Activated B cell treated with CpG ODN at 0.5 μM for 24 hours (primary cell): ENCODE measurements at regions of chr20 and their contacts with region 1.

Region 1: DNA sequence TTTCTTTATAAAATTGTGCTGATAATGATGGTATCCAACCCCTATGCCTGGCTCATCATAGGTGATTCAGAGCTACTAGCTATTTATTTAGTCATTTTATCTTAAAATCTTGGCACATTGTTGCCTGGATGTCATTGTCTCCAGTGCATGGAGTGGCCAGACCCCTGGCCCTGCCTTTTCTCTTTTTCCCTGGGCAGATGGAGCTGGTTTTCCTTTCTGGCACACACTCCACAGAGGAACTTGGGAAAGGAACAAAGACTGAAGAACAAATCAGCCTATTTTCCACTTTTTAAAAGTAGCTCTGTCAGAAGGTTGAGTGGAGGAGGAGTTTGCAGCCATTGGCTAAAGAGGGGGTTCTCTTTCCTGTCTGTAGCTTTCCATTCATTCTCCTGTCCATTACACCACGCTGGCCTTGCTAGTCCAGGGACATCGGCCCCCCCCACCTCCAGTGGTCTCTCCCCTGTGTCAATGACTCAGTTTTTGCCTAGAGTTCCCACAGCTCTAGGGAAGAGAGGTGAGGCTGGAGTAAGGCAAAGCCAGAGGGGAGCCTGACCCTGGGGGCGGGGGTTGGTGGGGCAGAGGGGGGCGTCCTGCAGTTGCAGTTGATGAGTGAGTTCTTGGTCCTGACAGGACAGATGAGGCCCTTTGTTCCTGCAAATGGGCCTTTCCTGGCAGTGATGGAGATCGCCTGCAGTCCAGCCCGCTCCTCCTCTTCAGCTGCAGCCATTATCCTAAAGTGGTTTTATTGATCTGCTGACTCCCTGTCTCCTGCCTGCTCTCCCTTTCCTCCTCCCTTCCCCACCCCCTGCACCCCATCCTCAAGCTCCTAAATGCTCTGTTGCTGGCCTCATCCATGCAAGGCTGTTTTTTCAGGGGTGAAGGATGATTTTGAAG is 774.5 kb downstream of the DHX35 start:
- DNase-seq: no peak
- ATAC-seq: no peak
- H3K4me3 Mint-ChIP-seq: no peak overlapping the region
- H3K27ac Mint-ChIP-seq: no peak overlapping the region
- H3K4me1 Mint-ChIP-seq: no peaks in the 10 kb centered on the region
- H3K27me3 Mint-ChIP-seq: no peaks in the 10 kb centered on the region
- CTCF ChIP-seq: no peak

Region 2: DNA sequence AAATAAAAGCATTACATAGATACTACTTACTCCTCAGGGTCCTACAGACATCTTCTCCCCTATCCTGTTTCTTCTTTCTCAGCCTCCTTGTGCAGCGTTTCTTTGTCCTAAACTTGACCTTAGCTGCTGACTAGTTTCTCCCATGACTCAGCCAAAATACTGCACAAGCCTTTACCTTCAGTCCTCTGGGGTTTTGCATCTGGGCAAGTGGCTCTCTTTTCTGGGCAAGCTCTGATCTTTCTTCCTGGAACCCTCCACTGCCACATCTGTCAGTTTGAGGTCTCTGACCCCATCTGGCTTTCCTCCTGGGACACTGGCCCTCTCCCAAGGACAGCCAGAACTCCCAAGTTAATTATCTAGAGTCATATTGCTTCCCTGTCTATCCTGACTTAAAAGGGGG is 63.9 kb after region 1 on chr20:
- CTCF ChIA-PET with region 1: no interaction called
- POLR2A ChIA-PET with region 1: no interaction called
- intact Hi-C with region 1: no loop called
- DNase-seq: no peak
- ATAC-seq: no peak
- H3K4me3 Mint-ChIP-seq: no peak overlapping the region
- H3K27ac Mint-ChIP-seq: no peak overlapping the region
- H3K4me1 Mint-ChIP-seq: no peaks in the 10 kb centered on the region
- H3K27me3 Mint-ChIP-seq: peaks cover 3% of the 10 kb centered on the region
- CTCF ChIP-seq: no peak

Region 3: DNA sequence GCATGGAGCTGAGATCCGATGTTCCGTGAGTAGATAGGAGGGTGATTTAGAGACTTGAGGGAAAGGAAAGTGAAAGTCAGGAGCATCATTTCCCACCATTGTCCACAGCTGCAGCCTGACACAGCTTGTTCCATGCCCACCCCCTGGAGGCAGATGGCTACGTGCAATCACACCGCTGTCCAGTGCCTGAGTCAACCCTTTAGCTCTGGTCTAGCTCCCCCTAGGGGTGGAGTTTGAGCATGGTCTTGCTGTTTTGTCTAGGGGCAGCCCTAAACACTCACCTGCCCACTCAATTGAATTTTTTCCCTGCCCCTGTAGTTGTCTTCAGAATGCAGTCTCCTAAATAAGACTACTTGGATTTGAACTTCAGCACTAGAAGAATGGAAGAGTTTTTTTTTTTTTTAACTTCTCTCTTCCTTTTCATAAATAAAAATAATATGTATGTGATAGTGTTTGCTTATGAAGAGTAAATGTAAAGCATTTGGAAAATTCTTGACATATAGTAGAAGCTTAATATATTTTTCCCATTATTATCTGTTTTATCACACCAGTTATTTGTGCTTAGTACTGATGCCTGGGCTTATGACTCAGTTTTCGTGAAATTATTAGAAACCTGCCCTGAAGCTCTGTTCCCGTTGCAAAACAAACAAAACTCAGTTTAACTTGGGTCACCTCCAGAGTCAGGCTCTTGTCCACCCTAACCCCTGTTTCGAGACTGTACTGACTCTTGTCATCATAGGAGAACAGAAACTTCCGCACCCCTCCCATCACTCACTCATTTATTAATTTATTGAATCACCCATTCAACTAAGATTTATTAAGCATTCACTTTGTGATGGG is 137.6 kb after region 1 on chr20:
- CTCF ChIA-PET with region 1: no interaction called
- POLR2A ChIA-PET with region 1: no interaction called
- intact Hi-C with region 1: loop called (anchors 5 kb)
- DNase-seq: peak; percentile 23
- ATAC-seq: peak; percentile 95
- H3K4me3 Mint-ChIP-seq: no peak overlapping the region
- H3K27ac Mint-ChIP-seq: peak overlapping the region; percentile 24
- H3K4me1 Mint-ChIP-seq: peaks cover 9% of the 10 kb centered on the region
- H3K27me3 Mint-ChIP-seq: no peaks in the 10 kb centered on the region
- CTCF ChIP-seq: no peak